ENCODE measurements at regions of chr1 and their contacts with region 1.

Region 1: GRCh38 chr1:22089787-22090186 is 37.3 kb downstream of the CDC42 start:
- DNase-seq: peak; percentile 11
- H3K4me3 Mint-ChIP-seq: peak overlapping the region; percentile 50
- H3K27ac Mint-ChIP-seq: peak overlapping the region; percentile 80
- H3K4me1 Mint-ChIP-seq: peaks cover 83% of the 10 kb centered on the region
- H3K27me3 Mint-ChIP-seq: no peaks in the 10 kb centered on the region

Region 2: GRCh38 chr1:22018583-22019559 is 70.9 kb before region 1 on chr1:
- intact Hi-C with region 1: loop called (anchors 1 kb)
- DNase-seq: peak; percentile 70
- H3K4me3 Mint-ChIP-seq: peak overlapping the region; percentile 32
- H3K27ac Mint-ChIP-seq: peak overlapping the region; percentile 96
- H3K4me1 Mint-ChIP-seq: peaks cover 22% of the 10 kb centered on the region
- H3K27me3 Mint-ChIP-seq: peaks cover 3% of the 10 kb centered on the region

Region 3: GRCh38 chr1:22025368-22026155 is 64.2 kb before region 1 on chr1:
- intact Hi-C with region 1: loop called (anchors 2 kb)
- DNase-seq: peak; percentile 90
- H3K4me3 Mint-ChIP-seq: peak overlapping the region; percentile 99
- H3K27ac Mint-ChIP-seq: peak overlapping the region; percentile 100
- H3K4me1 Mint-ChIP-seq: peaks cover 55% of the 10 kb centered on the region
- H3K27me3 Mint-ChIP-seq: no peaks in the 10 kb centered on the region

Region 4: DNA sequence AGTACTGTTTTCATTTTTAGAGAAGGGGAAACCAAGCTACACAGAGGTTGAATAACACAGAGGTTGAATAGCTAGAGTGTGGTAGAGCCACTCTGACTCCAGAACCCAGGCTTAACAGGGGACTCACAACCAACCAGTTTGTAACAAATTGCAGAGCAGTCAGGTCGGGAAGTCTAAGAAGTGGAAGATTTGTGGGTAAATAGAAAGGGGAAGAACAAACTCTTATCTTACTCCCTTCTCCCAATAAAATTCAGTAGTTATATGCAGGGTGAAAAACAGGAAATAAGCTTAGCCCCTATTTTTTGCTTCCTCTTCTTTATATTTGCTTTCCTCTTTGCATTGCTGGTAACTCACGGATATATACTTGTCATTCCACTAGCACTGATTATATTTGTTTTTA is 14.1 kb before region 1 on chr1:
- intact Hi-C with region 1: loop called (anchors 2 kb)
- DNase-seq: no peak
- H3K4me3 Mint-ChIP-seq: no peak overlapping the region
- H3K27ac Mint-ChIP-seq: peak overlapping the region; percentile 54
- H3K4me1 Mint-ChIP-seq: peaks cover 63% of the 10 kb centered on the region
- H3K27me3 Mint-ChIP-seq: no peaks in the 10 kb centered on the region

Region 5: GRCh38 chr1:22105611-22106207 is 15.9 kb after region 1 on chr1:
- intact Hi-C with region 1: loop called (anchors 1 kb)
- DNase-seq: no peak
- H3K4me3 Mint-ChIP-seq: no peak overlapping the region
- H3K27ac Mint-ChIP-seq: peak overlapping the region; percentile 89
- H3K4me1 Mint-ChIP-seq: peaks cover 50% of the 10 kb centered on the region
- H3K27me3 Mint-ChIP-seq: no peaks in the 10 kb centered on the region

Region 6: GRCh38 chr1:22225858-22226589 is 136.2 kb after region 1 on chr1:
- intact Hi-C with region 1: no loop called
- DNase-seq: no peak
- H3K4me3 Mint-ChIP-seq: no peak overlapping the region
- H3K27ac Mint-ChIP-seq: no peak overlapping the region
- H3K4me1 Mint-ChIP-seq: no peaks in the 10 kb centered on the region
- H3K27me3 Mint-ChIP-seq: peaks cover 2% of the 10 kb centered on the region